ENCODE measurements at regions of chr15 and their contacts with region 1.

Region 1: DNA sequence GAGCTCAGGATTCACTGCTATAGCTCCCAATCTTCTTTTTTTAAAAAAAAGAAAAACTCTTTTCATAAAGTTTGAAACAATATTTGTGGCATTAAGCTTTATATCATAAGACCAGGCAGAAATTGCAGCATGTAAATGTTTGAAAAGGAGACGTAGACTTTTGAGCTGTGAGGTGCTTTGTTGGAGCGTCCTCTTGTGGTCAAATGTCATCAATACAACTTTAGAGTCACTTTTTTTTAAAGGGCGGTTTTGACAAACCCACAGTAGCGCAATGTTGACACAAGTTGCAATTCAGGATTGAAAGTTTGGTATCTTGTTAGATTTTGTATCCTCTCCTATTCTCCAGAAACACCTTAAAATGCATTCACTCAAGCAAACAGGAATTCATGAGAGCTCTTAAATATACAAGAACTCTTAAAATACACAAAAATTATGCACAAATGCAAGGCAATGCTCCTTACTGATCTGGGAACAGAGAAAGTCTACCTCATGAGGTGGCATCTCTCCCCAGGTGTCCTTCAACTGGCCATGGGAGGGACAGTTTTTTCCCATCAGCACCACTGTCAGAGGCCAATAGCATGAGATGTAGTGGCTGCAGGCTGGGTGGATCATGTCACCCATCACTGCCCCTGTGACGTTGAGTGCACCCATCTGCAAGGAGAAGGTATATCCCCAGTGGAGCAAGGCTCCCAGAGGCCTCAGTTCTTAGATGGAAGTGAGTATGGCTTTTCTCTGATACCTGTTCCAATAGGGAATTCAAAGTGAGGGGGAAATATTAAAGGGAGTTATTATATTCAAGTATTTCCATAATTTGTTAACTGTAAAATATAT is 70.7 kb downstream of the ANXA2 start:
- H3K4me3 ChIP-seq: no peak overlapping the region
- H3K27ac ChIP-seq: no peak overlapping the region
- H3K4me1 ChIP-seq: 0 out of 2 replicates have a peak, but pooled peaks cover 6% of the 10 kb centered on the region
- CTCF ChIP-seq: 0 out of 2 replicates have a peak, but pooled peaks have one; percentile 33

Region 2: DNA sequence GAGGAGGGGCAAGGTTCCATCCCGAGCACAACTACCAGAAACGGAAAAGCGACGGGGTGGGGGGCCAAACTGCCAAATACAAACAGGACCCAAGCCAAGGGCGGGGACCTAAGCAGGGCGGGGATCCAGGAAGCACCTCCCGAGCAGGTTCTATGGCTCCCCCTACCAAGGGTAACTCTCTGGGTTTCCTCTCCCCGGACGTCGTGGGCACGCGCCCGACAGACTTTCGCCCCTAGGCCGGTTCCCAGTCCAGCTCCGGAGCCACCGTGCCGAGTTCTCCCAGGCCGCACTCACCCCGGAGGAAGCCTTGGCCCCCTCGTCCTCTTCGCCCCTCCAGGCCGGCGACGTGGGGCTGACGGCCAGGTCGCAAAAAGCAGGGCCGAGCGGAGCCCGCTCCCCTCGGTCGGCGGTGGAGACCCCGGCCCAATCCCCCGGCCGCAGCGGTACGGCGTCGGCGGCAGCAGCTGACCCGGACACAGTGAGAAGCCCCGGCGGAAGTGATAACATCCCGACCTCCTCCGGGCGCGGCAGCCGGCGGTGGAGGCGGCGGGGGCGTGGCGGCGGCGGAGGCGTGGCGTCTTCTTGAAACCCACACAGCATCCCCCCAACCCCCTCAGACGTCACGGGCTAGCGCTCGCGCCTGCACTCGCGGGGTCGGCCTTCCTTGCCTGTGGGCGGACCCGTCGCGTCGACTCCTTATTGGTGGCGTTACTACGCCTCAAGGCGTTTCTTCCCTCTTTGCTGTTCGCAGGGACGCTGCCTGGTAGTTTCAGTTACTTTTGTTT is 638.0 kb before region 1 on chr15 and contains the start of gene BNIP2:
- CTCF ChIA-PET with region 1: interaction called, 64 read pairs
- POLR2A ChIA-PET with region 1: no interaction called
- H3K4me3 ChIP-seq: peak within 1 kb of the TSS; percentile 99
- H3K27ac ChIP-seq: peak within 1 kb of the TSS; percentile 85
- H3K4me1 ChIP-seq: peaks cover 7% of the 10 kb centered on the region; the same call in 1 of the 2 replicates
- CTCF ChIP-seq: peak; percentile 46

Region 3: DNA sequence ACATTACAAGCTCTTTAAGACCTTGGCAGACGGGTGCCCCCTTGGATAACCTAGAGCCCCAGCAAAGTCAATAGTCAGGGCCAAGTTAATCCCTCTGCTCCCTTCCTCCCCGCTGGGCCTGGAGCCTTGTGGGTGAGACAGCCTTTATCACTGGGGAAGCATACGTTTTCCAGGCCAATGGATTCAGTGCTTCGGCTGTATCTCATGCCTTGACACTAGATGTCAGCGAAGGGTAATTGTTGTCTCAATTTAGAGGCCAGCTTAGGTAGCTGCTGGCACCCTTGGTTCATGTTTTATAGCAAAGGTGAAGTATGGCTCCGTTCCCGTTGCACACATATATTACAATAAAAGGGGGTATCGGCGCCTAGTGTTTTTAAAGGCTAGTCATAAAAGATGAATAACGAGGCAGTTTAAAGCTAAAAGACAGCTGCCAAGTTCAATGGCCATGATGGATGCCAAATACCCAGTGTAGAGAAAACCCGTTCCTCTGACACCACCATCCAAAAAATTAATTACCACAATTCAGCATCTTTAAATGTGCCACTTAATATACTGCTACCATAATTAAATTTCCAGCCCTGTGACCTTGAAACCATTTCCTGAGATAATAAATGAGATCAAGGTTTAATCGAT is 585.6 kb before region 1 on chr15:
- CTCF ChIA-PET with region 1: interaction called, 30 read pairs
- POLR2A ChIA-PET with region 1: no interaction called
- H3K4me3 ChIP-seq: no peak overlapping the region
- H3K27ac ChIP-seq: no peak overlapping the region
- H3K4me1 ChIP-seq: peaks cover 4% of the 10 kb centered on the region
- CTCF ChIP-seq: peak; percentile 43

Region 4: DNA sequence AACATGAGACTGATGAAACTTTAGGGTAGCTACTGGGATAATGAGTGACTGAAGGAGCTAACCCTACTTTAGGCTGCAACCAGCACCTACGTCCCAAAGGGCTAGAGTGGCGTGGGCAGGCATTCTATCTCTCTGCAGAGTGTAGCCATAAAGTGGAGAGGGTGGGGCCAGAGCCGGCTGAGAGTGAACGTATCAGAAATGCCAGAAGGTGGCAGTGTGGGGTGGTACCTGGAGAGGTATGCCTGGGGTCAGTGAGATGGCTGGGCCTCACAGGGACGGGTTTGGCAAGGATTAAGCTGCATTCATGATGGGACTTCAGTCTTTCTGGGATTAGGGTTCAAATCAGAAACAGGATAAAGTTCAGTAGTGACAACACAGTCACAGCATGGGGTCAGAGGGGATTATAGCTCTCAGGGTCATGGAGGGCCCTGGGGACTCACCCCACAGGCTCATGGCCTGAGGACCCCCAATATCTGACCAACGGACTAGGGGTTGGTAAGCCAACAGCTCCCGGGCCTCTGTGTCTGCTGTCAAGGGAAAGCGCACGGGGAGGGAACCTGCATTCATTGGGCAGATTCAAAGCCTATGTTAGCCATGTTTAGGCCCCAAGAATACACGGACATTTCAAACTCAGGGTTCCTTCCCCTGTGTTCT is 409.4 kb before region 1 on chr15:
- CTCF ChIA-PET with region 1: interaction called, 71 read pairs
- POLR2A ChIA-PET with region 1: no interaction called
- H3K4me3 ChIP-seq: no peak overlapping the region
- H3K27ac ChIP-seq: no peak overlapping the region
- H3K4me1 ChIP-seq: peaks cover 13% of the 10 kb centered on the region
- CTCF ChIP-seq: peak; percentile 76

Region 5: DNA sequence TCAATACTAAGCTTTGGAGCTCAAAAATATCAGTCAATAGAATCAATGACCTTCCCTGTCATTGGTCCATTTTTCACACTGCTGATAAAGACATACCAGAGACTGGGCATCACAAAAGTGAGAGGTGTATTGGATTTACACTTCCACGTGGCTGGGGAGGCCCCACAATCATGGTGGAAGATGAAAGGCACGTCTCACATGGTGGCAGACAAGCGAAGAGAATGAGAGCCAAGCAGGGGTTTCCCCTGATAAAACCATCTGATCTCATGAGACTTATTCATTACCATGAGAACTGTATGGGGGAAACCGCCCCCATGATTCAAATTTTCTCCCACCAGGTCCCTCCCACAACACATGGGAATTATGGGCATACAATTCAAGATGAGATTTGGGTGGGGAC is 11.2 kb before region 1 on chr15:
- CTCF ChIA-PET with region 1: interaction called, 27 read pairs
- POLR2A ChIA-PET with region 1: no interaction called
- H3K4me3 ChIP-seq: no peak overlapping the region
- H3K27ac ChIP-seq: no peak overlapping the region
- H3K4me1 ChIP-seq: no peaks in the 10 kb centered on the region
- CTCF ChIP-seq: no peak